Left ventricle myocardium inferior (tissue), 1 donor: ENCODE measurements at regions of chr9 and their contacts with region 1.

Region 1: GRCh38 chr9:33225319-33226149 is 14.4 kb upstream of the SPINK4 start:
- DNase-seq: no peak
- H3K4me3 ChIP-seq: no peak overlapping the region
- H3K27ac ChIP-seq: no peak overlapping the region
- H3K4me1 ChIP-seq: peaks cover 4% of the 10 kb centered on the region
- H3K27me3 ChIP-seq: no peaks in the 10 kb centered on the region
- CTCF ChIP-seq: peak; percentile 83

Region 2: DNA sequence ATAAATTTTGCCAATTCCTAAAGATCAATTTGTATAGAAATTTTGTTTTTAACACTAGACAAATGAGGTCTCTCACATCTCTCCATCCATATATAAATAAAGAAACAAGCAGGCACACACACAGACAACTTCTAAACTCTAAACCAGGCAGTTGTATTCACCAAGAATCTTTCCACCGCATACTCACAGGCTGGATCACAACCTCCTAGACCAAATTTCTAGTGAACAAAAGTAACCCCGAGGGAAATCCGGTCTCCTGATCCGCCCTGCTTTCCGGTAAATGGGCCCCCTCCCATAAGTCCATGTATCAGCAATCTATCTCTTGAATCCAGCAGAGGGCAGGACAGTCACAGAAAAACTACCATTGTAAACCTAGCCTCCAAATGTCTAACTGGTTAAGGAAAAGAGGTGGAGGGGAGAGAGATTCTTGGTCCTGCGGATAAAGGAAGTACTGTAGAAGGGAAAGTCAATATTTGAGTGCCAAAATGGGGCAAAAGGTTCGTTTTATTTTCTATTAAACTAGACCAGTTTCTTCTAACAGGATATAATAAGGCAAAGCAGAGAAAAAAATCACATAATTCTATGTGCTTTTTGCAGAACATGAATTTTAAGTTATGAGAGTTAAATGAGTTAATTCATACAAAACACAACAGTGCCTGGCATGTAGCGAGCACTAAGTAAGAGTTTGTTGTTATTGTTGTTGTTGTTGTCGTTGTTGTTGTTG is 144.2 kb before region 1 on chr9:
- intact Hi-C with region 1: loop called (anchors 2 kb)
- DNase-seq: peak; percentile 28
- H3K4me3 ChIP-seq: no peak overlapping the region
- H3K27ac ChIP-seq: peak overlapping the region; percentile 59
- H3K4me1 ChIP-seq: peaks cover 34% of the 10 kb centered on the region
- H3K27me3 ChIP-seq: no peaks in the 10 kb centered on the region
- CTCF ChIP-seq: peak; percentile 83